ENCODE measurements at regions of chr1 and their contacts with region 1.

Region 1: DNA sequence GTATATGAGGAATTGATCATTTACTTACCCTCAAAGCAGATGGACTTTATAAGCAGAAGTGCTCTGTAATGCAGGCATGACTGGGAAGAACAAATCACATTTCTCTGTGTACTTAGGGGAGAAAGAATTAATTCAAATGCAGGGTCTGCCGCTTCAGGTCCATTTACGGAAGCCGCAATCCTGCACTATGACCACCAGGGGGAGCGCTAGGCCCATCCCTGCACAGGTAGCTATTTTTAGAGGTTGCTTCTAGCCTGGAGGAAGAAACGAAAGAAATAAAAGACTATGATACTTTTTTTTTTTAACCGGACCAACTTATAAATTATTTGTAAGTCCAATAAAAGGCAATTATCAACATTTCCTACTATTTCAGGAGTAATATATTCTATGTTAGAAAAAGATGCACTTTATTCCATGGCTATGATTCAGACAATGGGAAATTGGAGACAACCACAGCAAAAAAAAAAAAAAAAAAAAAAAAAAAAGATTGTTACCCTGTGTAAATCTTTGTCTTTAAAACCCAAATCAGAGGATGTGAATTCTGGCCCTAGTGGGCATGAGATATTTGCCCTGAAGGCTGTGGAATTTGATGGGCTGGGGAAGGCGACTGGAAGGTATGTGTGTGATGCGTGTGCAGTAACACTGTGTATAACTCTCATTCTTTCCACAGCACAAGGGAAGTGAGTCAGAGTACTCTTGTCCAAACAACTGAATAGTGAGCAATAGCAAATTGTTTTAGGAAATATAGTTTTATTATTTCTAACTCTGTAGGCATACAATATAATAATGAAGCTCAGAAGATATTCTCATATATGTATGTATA is 12.9 kb upstream of the FYB2 start:
- DNase-seq: peak; percentile 64 to 76 (median 75)
- ATAC-seq: peak; percentile 84
- H3K4me3 ChIP-seq: no peak overlapping the region
- H3K27ac ChIP-seq: no peak overlapping the region
- H3K4me1 ChIP-seq: no peaks in the 10 kb centered on the region
- H3K27me3 ChIP-seq: peaks cover 0 to 5% of the 10 kb centered on the region in 2 experiments; a peak in 2 of 5 replicates
- CTCF ChIP-seq: peak; percentile 84 to 93 (median 86)
- EP300 ChIP-seq: no peak
- POLR2A ChIP-seq: no peak
- RAD21 ChIP-seq: peak; percentile 91 to 93

Region 2: DNA sequence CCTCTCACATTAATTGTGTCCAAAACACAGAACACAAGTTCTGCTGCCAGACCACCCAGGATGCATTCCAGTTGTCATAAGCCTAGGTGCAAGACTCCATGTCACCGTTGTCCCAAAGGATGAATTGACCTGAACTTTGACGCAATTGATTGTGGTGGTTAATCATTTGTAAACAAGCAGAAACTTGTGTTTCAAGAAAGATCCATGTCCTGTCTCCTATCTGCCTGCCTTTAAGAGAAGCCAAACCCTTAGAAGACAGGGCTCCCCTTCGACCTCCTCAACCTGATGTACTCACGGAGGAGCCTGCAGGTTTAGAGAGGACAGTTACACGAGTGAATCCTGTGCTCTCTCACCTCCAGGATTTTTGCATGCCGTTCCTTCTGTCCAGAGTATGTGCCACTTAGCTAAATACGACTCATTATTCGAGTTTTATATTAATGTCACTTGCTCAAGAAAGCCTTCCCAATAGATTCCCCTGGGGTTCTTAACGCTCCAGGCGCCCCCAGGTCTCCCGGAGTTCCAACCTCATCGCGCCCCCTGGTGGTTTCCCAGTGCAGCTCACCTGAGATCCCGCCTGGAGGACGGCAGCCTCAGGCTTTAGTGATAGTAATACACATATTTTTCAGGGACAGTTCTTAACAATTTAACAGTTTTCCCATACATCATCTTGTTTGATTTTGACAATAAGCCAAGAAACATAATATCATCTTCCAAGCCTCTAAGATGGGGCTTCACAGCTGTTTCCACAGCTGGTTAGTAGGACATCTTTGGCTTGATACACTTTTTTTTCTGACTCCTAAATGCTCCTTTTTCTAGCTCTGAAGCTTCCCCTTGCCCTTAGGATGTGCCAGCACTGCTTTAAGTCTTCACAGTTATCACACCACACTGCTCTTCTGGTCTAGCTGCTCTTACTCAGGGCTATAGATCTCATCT is 136.1 kb after region 1 on chr1:
- CTCF ChIA-PET with region 1: interaction called, 26 read pairs
- POLR2A ChIA-PET with region 1: interaction called, 3 read pairs
- in situ Hi-C with region 1: loop called (anchors 10 kb)
- intact Hi-C with region 1: loop called (anchors 1 kb)
- DNase-seq: peak; percentile 53 to 73 (median 70)
- ATAC-seq: peak; percentile 91
- H3K4me3 ChIP-seq: no peak overlapping the region
- H3K27ac ChIP-seq: no peak overlapping the region
- H3K4me1 ChIP-seq: no peaks in the 10 kb centered on the region
- H3K27me3 ChIP-seq: 0 out of 5 replicates have a peak, but pooled peaks cover 0 to 3% of the 10 kb centered on the region in 2 experiments
- CTCF ChIP-seq: peak; percentile 66 to 76 (median 68)
- EP300 ChIP-seq: no peak
- POLR2A ChIP-seq: no peak
- RAD21 ChIP-seq: peak in 1 of 2 experiments; percentile 59; a peak in 2 of 4 replicates

Region 3: DNA sequence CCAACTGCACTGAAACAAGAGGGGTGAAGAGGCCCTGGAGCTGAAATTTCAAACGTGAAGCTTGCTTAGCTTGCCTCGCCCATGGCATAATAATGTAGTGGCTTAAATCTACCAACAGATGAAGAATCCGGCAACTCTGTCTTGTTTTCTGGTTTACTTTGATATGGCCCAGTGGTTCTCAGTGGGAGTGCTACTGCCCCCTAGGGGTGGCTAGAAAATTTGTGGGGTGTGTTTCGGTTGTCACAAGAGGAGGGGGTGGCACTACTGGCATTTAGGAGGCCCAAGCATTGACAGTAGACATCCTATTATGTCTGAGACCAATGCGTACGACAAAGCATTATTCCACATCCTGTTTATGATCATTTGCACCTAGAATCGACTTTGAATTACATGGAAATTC is 185.6 kb after region 1 on chr1:
- CTCF ChIA-PET with region 1: no interaction called
- POLR2A ChIA-PET with region 1: no interaction called
- in situ Hi-C with region 1: no loop called
- intact Hi-C with region 1: loop called (anchors 5 kb)
- DNase-seq: peak; percentile 46 to 69 (median 56)
- ATAC-seq: peak; percentile 84
- H3K4me3 ChIP-seq: no peak overlapping the region
- H3K27ac ChIP-seq: no peak overlapping the region
- H3K4me1 ChIP-seq: no peaks in the 10 kb centered on the region
- H3K27me3 ChIP-seq: 0 out of 5 replicates have a peak, but pooled peaks cover 0 to 7% of the 10 kb centered on the region in 2 experiments
- CTCF ChIP-seq: peak; percentile 54 to 64 (median 62)
- EP300 ChIP-seq: no peak
- POLR2A ChIP-seq: no peak
- RAD21 ChIP-seq: peak in 1 of 2 experiments; percentile 26; a peak in 1 of 4 replicates

Region 4: GRCh38 chr1:58047265-58047858 is 1215.3 kb after region 1 on chr1:
- CTCF ChIA-PET with region 1: no interaction called
- POLR2A ChIA-PET with region 1: no interaction called
- in situ Hi-C with region 1: loop called (anchors 25 kb)
- intact Hi-C with region 1: loop called (anchors 1 kb)
- DNase-seq: peak; percentile 37 to 76 (median 70)
- ATAC-seq: peak; percentile 91
- H3K4me3 ChIP-seq: no peak overlapping the region
- H3K27ac ChIP-seq: no peak overlapping the region
- H3K4me1 ChIP-seq: no peaks in the 10 kb centered on the region
- H3K27me3 ChIP-seq: no peaks in the 10 kb centered on the region
- CTCF ChIP-seq: peak; percentile 58 to 71 (median 63)
- EP300 ChIP-seq: no peak
- POLR2A ChIP-seq: no peak
- RAD21 ChIP-seq: peak; percentile 38 to 67; a peak in 3 of 4 replicates

Region 5: DNA sequence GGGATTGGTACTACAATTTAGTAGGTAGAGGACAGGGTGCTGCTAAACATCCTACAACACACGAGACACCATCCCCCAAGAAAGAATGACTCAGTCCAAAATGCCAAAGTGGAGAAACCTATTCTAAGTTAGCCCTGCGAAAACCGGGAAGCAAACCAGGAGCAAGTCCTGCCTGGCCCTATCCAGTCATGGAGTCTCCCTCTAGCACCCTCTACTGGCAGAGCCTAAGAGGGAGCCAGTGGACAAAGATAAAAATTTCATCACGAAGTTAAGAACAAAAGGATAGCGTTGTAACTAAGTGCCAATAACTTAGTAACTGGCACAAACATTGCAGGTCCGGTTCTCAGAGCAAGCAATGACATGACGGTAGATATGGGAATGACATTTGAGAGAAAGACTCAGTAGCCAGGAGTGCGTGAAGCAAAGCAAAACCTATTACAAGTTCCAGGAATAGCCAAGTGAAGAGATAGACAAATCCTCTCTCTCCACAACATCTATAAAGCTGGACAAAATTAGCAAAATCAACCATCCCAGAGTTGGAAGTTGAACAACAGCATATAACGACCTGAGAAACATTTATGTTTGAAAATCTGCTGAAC is 1331.0 kb after region 1 on chr1:
- CTCF ChIA-PET with region 1: interaction called, 4 read pairs
- POLR2A ChIA-PET with region 1: no interaction called
- in situ Hi-C with region 1: no loop called
- intact Hi-C with region 1: loop called (anchors 1 kb)
- DNase-seq: peak; percentile 30 to 61 (median 34)
- ATAC-seq: peak; percentile 89
- H3K4me3 ChIP-seq: no peak overlapping the region
- H3K27ac ChIP-seq: no peak overlapping the region
- H3K4me1 ChIP-seq: no peaks in the 10 kb centered on the region
- H3K27me3 ChIP-seq: no peaks in the 10 kb centered on the region
- CTCF ChIP-seq: peak; percentile 59 to 84 (median 79)
- EP300 ChIP-seq: no peak
- POLR2A ChIP-seq: no peak
- RAD21 ChIP-seq: peak in 1 of 2 experiments; percentile 41; a peak in 3 of 4 replicates

Region 6: DNA sequence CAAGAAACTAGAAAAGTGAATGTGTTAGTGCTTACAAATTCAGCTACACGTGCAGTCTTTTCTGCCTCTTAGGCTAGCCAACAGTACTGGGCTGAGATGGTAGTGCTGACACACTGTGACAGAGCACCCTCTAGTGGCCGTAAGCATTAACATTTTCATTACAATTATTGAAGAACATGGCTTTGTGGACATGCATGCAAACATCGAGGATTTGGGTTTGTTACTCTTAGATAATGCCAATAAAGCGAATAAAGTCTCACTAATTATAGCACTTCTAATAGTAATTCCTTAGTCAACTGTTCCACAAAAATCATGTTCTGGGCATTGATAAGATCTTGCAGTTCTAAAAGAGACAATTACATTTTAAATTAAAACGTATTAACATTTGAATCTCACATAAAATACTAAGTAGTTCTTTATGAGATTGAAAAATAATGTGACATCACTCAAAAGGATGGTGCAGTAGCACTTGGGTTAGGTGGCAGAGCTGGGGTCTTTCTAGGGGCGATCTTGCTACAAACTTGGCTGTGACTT is 1820.6 kb after region 1 on chr1:
- CTCF ChIA-PET with region 1: no interaction called
- POLR2A ChIA-PET with region 1: no interaction called
- in situ Hi-C with region 1: no loop called
- intact Hi-C with region 1: loop called (anchors 5 kb)
- DNase-seq: peak; percentile 64 to 80 (median 74)
- ATAC-seq: peak; percentile 96
- H3K4me3 ChIP-seq: no peak overlapping the region
- H3K27ac ChIP-seq: no peak overlapping the region
- H3K4me1 ChIP-seq: peaks cover 0 to 6% of the 10 kb centered on the region in 2 experiments; a peak in 2 of 5 replicates
- H3K27me3 ChIP-seq: no peaks in the 10 kb centered on the region
- CTCF ChIP-seq: peak; percentile 76 to 89 (median 76)
- EP300 ChIP-seq: no peak
- POLR2A ChIP-seq: no peak; the same call in 1 of the 2 replicates
- RAD21 ChIP-seq: peak; percentile 81 to 85